ENCODE measurements at regions of chr12 and their contacts with region 1.

Region 1: DNA sequence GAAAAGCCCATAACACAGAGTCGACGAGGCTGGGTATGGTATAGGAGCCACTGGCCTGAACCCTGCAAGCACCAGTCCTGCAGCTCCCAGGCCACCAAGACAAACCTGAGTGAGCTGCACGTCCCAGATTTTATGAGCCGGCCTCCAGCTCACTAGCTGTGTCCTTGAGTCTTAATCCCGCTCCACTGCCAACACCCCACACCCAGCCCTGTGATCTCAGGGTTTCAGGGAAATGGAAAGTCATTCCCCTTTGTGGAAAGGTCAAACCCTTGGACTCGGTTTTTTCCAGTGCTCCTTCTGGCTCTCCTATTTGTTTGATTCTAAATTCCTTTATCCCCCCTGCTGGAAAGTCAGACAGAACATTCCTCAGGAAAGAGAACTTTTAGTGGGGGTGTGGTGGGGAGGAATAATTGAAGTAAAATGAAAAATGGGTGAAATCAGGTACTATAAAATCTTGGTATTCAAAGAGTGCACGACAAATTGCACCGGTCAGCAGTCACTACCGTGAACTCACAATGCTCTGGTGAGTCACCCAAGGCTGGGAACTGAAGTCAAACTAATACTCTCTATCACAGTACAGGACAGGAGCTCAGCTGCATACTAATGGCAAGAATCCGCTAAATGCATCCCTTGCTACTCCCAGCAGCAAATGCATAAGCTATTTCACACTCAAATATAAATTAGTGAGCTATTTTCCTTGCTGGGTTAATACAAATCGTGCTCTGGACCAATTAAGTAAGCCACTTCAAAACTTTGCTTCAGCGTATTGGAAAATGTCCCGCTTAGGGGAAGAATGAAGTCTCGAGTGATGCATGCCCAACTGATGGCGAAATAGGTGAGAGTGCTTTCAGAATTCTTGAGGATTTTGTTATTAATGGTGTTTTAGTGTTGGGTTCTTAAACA is 9.0 kb downstream of the PITPNM2 start:
- DNase-seq: peak; percentile 28
- ATAC-seq: peak; percentile 88
- H3K4me3 ChIP-seq: peak overlapping the region in 1 of 2 experiments; percentile 16; a peak in 2 of 4 replicates
- H3K27ac ChIP-seq: peak overlapping the region; percentile 89
- H3K4me1 ChIP-seq: peaks cover 49% of the 10 kb centered on the region
- H3K27me3 ChIP-seq: no peaks in the 10 kb centered on the region
- CTCF ChIP-seq: no peak

Region 2: DNA sequence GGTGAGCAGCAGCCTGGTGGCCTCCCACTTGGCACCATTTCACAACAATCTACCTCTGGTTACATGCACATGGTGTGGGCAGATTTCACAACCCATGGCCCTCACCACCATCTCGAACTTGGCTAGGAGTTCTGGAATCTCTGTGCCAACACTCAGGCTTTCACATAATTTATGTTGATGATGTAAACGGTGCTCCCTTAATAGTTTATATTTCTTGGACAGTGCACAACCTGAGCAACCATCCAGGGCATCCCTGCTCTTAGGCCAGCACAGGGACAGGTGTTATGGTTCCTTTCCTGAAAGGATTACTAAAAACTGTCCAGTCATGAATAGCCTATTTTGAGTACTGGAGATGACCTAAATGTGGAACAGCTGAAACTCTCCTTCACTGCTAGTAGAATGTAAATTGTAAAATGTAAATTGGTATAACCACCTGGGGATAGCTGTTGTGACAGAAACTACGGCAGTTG is 204.2 kb before region 1 on chr12:
- CTCF ChIA-PET with region 1: no interaction called
- POLR2A ChIA-PET with region 1: no interaction called
- in situ Hi-C with region 1: no loop called
- intact Hi-C with region 1: no loop called
- DNase-seq: no peak
- ATAC-seq: no peak
- H3K4me3 ChIP-seq: no peak overlapping the region
- H3K27ac ChIP-seq: no peak overlapping the region
- H3K4me1 ChIP-seq: peaks cover 3% of the 10 kb centered on the region; the same call in 1 of the 2 replicates
- H3K27me3 ChIP-seq: no peaks in the 10 kb centered on the region
- CTCF ChIP-seq: no peak

Region 3: DNA sequence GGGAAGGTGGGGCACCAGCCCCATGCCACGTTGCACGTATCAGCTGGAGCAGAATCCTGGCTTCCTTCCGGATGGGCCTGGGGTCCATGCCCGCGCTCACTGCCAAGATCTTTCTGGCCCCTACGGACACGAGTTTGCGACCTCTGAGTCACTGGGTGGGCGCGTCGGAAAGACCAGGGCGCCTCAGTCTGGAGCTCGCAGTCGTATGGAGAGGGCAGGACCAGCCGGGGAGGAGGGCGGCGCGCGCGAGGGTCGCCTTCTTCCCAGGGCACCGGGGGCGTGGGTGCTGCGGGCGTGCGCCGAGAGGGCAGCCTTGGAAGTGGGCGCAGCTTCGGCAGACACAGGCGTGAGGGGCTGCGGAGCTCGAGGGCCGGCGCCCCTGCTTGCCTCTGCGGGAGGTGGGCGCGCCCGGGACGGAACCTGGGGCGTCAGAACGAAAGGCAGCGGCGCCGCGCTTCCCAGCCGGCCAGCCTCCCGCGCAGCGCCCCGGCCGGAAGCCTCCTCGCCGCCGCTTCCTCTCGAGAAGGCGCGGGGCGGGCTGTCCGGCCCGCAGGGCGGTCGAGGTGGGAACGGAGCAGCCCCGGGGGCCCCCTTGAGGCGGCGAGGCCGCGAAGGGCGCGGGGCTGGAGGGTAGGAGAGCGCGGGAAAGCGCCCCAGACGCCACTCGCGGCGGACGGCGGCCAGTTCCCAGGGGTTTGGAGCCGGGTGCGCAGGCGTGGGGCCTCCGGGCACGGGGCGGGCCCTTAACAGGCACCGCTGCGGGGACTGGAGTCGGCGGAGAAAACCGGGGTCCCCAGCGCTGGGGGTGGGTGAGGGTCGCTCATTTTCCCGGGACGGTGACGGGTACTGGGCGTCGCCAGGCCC is 161.5 kb before region 1 on chr12 and contains the start of gene ARL6IP4:
- CTCF ChIA-PET with region 1: no interaction called
- POLR2A ChIA-PET with region 1: no interaction called
- in situ Hi-C with region 1: no loop called
- intact Hi-C with region 1: loop called (anchors 10 kb)
- DNase-seq: no peak
- ATAC-seq: peak; percentile 71
- H3K4me3 ChIP-seq: peak within 1 kb of the TSS; percentile 69 to 78
- H3K27ac ChIP-seq: peak within 1 kb of the TSS; percentile 92
- H3K4me1 ChIP-seq: peaks cover 51% of the 10 kb centered on the region
- H3K27me3 ChIP-seq: no peaks in the 10 kb centered on the region
- CTCF ChIP-seq: no peak
- total RNA-seq, gene ARL6IP4: 184 TPM

Region 4: DNA sequence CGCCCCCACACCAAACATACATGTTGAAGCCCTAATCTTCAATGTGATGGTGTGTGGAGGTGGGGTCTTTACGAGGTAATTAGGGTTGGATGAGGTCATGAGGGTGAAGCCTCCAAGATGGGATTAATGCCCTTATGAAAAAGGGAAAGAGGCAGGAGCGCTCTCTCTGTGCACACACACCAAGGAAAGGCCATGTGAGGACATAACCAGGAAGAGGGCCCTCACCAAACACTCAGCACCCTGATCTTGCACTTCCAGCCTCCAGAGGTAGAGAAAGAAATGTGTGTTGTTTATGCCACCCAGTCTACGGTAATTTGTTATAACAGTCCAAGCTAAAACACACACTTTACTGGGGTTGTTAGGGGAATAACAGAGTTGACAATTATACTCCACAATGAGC is 23.7 kb after region 1 on chr12:
- CTCF ChIA-PET with region 1: interaction called, 3 read pairs
- POLR2A ChIA-PET with region 1: interaction called, 12 read pairs
- in situ Hi-C with region 1: no loop called
- intact Hi-C with region 1: no loop called
- DNase-seq: no peak
- ATAC-seq: no peak
- H3K4me3 ChIP-seq: no peak overlapping the region
- H3K27ac ChIP-seq: no peak overlapping the region
- H3K4me1 ChIP-seq: no peaks in the 10 kb centered on the region
- H3K27me3 ChIP-seq: no peaks in the 10 kb centered on the region
- CTCF ChIP-seq: no peak

Measured in Panc1 (cell line).